ENCODE measurements at regions of chr13 and their contacts with region 1.

Region 1: GRCh38 chr13:54175466-54175865 is 1146.9 kb downstream of the OLFM4 start:
- DNase-seq: no peak

Region 2: GRCh38 chr13:53569453-53569852 is 606.0 kb before region 1 on chr13:
- intact Hi-C with region 1: loop called in 1 of 2 experiments (anchors 5 kb)
- DNase-seq: no peak

Measured in posterior vena cava (tissue), 2 donors.